PC-9 (cell line): ENCODE measurements at regions of chr2 and their contacts with region 1.

Region 1: GRCh38 chr2:175181104-175181876 is at the start of gene ATP5MC3:
- DNase-seq: peak; percentile 90 to 97
- H3K4me3 ChIP-seq: peak within 1 kb of the TSS; percentile 84
- H3K27ac ChIP-seq: peak within 1 kb of the TSS; percentile 69
- H3K4me1 ChIP-seq: peaks cover 44% of the 10 kb centered on the region
- H3K27me3 ChIP-seq: no peaks in the 10 kb centered on the region
- CTCF ChIP-seq: peak; percentile 52
- total RNA-seq, gene ATP5MC3: 450 and 528 TPM in 2 replicates

Region 2: DNA sequence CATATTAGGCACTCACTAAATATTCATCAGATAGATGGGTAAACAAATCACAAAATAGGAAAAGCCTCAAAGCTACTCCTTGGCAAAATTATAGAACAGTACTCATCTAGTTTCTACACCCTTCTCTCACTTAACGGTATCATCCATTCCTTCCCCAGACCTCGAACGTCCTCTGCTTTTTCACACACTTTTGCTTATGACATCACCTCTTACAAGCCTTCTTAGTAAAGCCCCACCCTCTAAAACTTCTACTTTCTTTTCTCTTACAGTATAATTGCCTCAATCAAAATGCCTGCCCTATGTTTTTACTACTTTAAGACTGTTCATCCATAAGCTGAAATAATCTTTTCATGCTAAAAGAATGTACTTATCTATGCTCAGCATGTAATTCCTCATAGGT is 184.2 kb before region 1 on chr2:
- CTCF ChIA-PET with region 1: no interaction called
- POLR2A ChIA-PET with region 1: no interaction called
- intact Hi-C with region 1: loop called (anchors 5 kb)
- DNase-seq: no peak
- H3K4me3 ChIP-seq: no peak overlapping the region
- H3K27ac ChIP-seq: no peak overlapping the region
- H3K4me1 ChIP-seq: peaks cover 14% of the 10 kb centered on the region; the same call in 1 of the 2 replicates
- H3K27me3 ChIP-seq: no peaks in the 10 kb centered on the region
- CTCF ChIP-seq: no peak

Region 3: GRCh38 chr2:175111200-175111657 is 70.1 kb before region 1 on chr2:
- CTCF ChIA-PET with region 1: no interaction called
- POLR2A ChIA-PET with region 1: no interaction called
- intact Hi-C with region 1: loop called (anchors 5 kb)
- DNase-seq: peak in 1 of 2 experiments; percentile 59
- H3K4me3 ChIP-seq: no peak overlapping the region
- H3K27ac ChIP-seq: no peak overlapping the region
- H3K4me1 ChIP-seq: no peaks in the 10 kb centered on the region
- H3K27me3 ChIP-seq: no peaks in the 10 kb centered on the region
- CTCF ChIP-seq: peak; percentile 98

Region 4: DNA sequence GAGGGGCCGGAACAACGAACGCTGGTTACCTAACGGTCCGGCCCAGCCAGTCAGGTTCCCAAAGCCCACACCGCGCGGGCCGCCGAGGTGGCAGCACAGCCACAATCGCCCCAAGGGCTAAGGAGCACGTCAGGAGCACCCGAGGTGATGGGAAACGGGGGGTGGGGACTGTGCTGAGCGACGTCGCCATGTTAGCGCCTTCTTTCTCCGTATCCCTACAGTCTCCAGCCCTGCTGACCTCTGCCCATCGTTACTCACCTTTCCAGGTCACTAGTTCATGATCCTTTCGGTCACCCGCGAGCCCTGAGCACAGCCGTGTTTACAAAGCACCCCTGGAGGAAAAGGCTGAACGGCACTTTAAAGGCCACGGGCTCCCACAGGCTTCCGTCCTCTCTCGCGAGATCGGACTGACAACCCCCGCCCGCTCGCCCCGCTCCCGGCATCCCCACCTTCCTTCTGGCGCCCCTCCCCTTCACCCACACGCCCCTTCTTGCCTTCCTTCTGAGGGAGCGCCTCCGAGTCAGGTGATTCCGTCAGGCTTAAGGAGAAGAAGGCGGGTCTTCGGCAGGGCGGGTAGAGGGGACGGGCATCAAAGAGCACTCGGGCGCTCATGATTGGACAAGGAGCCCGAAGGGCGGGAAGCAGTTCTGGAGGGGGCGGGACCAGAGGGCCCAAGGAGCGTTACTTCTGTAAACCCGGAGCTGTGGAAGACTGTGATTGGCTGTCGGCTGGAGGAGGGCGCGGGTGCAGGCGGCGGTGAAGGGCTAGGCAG is 13.3 kb before region 1 on chr2 and contains the start of gene ATF2:
- CTCF ChIA-PET with region 1: no interaction called
- POLR2A ChIA-PET with region 1: interaction called, 3 read pairs
- intact Hi-C with region 1: loop called (anchors 1 kb)
- DNase-seq: peak; percentile 100
- H3K4me3 ChIP-seq: peak within 1 kb of the TSS; percentile 91
- H3K27ac ChIP-seq: peak within 1 kb of the TSS; percentile 67
- H3K4me1 ChIP-seq: peaks cover 20% of the 10 kb centered on the region
- H3K27me3 ChIP-seq: no peaks in the 10 kb centered on the region
- CTCF ChIP-seq: no peak
- total RNA-seq, gene ATF2: 80.9 and 94.5 TPM in 2 replicates

Region 5: GRCh38 chr2:176001916-176002687 is 820.8 kb after region 1 on chr2 and contains the start of gene LNPK:
- CTCF ChIA-PET with region 1: no interaction called
- POLR2A ChIA-PET with region 1: no interaction called
- intact Hi-C with region 1: loop called (anchors 10 kb)
- DNase-seq: peak; percentile 90 to 98
- H3K4me3 ChIP-seq: peak within 1 kb of the TSS; percentile 82
- H3K27ac ChIP-seq: peak within 1 kb of the TSS; percentile 37
- H3K4me1 ChIP-seq: peaks cover 16% of the 10 kb centered on the region
- H3K27me3 ChIP-seq: no peaks in the 10 kb centered on the region
- CTCF ChIP-seq: no peak
- total RNA-seq, gene LNPK: 24.8 and 43.8 TPM in 2 replicates